Naive thymus-derived CD4-positive, alpha-beta T cell (primary cell): ENCODE measurements at regions of chr7 and their contacts with region 1.

Region 1: DNA sequence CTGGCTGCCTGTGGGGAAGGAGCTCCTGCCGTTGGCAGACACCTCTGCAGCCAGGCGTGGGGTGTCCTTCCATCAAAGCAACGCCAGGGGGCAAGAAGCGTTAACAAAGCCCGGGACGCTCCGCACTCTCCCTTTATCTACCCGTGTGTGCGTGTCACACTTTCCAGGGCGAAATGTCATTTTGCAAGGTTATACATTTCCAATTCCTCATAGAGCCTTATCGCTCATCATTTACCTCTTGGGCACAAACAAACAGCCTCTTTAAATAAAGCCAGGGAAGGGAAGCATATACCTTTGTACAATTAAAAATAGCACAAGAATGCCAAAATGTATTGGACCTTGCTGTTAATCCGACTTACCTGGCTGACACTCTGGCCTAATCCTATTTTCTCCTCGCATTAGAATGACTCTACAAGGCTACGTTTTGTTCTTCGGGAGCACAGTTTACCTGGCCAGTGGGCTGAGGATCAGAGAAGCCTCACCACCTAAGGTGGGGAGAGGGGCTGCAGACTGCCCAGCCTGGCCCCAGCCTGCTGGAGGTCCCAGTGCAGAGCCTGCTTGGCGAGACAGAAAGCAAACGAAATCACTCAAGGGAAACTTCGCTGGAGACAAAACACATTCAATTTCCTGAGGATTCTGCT is 77.6 kb upstream of the EN2 start:
- DNase-seq: peak; percentile 17 to 60 (median 49)
- ATAC-seq: peak; percentile 84
- H3K4me3 ChIP-seq: no peak overlapping the region
- H3K4me3 Mint-ChIP-seq: peak overlapping the region in 9 of 10 donors; percentile 14 to 72 (median 54)
- H3K27ac ChIP-seq: no peak overlapping the region
- H3K27ac Mint-ChIP-seq: peak overlapping the region in 1 of 9 donors; percentile 51
- H3K4me1 ChIP-seq: peaks cover 0 to 16% of the 10 kb centered on the region in 2 donors
- H3K4me1 Mint-ChIP-seq: peaks cover 13 to 50% (median 34%) of the 10 kb centered on the region in 7 donors
- H3K27me3 ChIP-seq: peaks cover 0 to 14% of the 10 kb centered on the region in 2 donors
- H3K27me3 Mint-ChIP-seq: peaks cover 68 to 89% (median 80%) of the 10 kb centered on the region in 5 donors

Region 2: GRCh38 chr7:155456738-155457564 is 76.6 kb after region 1 on chr7:
- CTCF ChIA-PET with region 1: no interaction called
- POLR2A ChIA-PET with region 1: no interaction called
- intact Hi-C with region 1: loop called in 1 of 2 experiments (anchors 2 kb)
- DNase-seq: no peak
- ATAC-seq: no peak
- H3K4me3 ChIP-seq: peak overlapping the region; percentile 24
- H3K4me3 Mint-ChIP-seq: peak overlapping the region; percentile 50 to 87 (median 74)
- H3K27ac ChIP-seq: no peak overlapping the region
- H3K27ac Mint-ChIP-seq: peak overlapping the region in 1 of 9 donors; percentile 83
- H3K4me1 ChIP-seq: no peaks in the 10 kb centered on the region
- H3K4me1 Mint-ChIP-seq: peaks cover 7 to 34% (median 20%) of the 10 kb centered on the region in 7 donors
- H3K27me3 ChIP-seq: peaks cover 0 to 9% of the 10 kb centered on the region in 2 donors
- H3K27me3 Mint-ChIP-seq: peaks cover 50 to 80% (median 68%) of the 10 kb centered on the region in 5 donors

Region 3: GRCh38 chr7:155509725-155510551 is 129.6 kb after region 1 on chr7:
- CTCF ChIA-PET with region 1: no interaction called
- POLR2A ChIA-PET with region 1: no interaction called
- intact Hi-C with region 1: loop called in 1 of 2 experiments (anchors 2 kb)
- DNase-seq: no peak
- ATAC-seq: no peak
- H3K4me3 ChIP-seq: no peak overlapping the region
- H3K4me3 Mint-ChIP-seq: peak overlapping the region; percentile 20 to 72 (median 52)
- H3K27ac ChIP-seq: no peak overlapping the region
- H3K27ac Mint-ChIP-seq: peak overlapping the region in 1 of 9 donors; percentile 70
- H3K4me1 ChIP-seq: peaks cover 0 to 7% of the 10 kb centered on the region in 2 donors
- H3K4me1 Mint-ChIP-seq: peaks cover 11 to 30% (median 18%) of the 10 kb centered on the region in 7 donors
- H3K27me3 ChIP-seq: peaks cover 15 to 28% of the 10 kb centered on the region in 2 donors
- H3K27me3 Mint-ChIP-seq: peaks cover 87 to 90% (median 89%) of the 10 kb centered on the region in 5 donors

Region 4: DNA sequence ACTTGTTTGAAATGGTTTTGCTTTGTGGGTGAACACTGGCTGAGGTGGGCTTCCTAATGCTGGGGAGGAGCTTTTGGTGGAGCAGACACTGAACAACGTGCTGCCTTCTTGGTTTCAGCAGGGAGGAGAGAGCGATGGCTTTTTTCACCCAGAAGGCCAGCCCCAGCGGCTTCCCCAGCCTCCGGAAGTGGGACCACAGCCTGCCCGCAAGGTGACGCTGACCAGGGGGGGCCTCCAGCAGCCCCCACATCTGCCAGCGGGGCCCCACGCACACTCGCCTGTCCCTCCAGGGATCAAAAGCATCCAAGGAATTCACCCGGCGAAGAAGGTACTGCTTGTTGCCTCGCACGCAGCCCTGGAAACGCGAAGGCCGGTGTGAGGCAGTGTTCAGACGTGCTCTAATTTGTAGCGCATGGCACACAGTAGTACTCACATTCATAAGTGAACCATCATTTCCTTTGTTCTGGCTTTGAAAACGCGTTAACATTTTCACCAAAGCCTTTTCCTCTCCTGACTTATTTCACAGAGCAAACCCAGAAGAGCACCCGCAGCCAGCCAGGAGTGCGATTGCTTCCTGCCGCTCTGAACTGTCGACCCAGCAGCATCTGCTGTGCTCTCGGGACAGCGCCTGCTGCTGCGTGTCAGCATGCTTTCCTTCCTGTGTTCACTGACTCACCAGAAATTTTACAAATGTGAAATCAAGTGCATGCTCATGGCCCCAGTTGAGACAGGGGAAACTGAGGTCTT is 383.5 kb after region 1 on chr7:
- CTCF ChIA-PET with region 1: no interaction called
- POLR2A ChIA-PET with region 1: no interaction called
- intact Hi-C with region 1: loop called (anchors 1 to 2 kb)
- DNase-seq: peak in 8 of 9 donors; percentile 48 to 73 (median 60)
- ATAC-seq: peak; percentile 80
- H3K4me3 ChIP-seq: peak overlapping the region; percentile 12
- H3K4me3 Mint-ChIP-seq: peak overlapping the region; percentile 64 to 91 (median 80)
- H3K27ac ChIP-seq: peak overlapping the region; percentile 67
- H3K27ac Mint-ChIP-seq: peak overlapping the region; percentile 73 to 98 (median 91)
- H3K4me1 ChIP-seq: peaks cover 24 to 31% of the 10 kb centered on the region in 2 donors
- H3K4me1 Mint-ChIP-seq: peaks cover 39 to 67% (median 61%) of the 10 kb centered on the region in 7 donors
- H3K27me3 ChIP-seq: no peaks in the 10 kb centered on the region
- H3K27me3 Mint-ChIP-seq: no peaks in the 10 kb centered on the region

Region 5: DNA sequence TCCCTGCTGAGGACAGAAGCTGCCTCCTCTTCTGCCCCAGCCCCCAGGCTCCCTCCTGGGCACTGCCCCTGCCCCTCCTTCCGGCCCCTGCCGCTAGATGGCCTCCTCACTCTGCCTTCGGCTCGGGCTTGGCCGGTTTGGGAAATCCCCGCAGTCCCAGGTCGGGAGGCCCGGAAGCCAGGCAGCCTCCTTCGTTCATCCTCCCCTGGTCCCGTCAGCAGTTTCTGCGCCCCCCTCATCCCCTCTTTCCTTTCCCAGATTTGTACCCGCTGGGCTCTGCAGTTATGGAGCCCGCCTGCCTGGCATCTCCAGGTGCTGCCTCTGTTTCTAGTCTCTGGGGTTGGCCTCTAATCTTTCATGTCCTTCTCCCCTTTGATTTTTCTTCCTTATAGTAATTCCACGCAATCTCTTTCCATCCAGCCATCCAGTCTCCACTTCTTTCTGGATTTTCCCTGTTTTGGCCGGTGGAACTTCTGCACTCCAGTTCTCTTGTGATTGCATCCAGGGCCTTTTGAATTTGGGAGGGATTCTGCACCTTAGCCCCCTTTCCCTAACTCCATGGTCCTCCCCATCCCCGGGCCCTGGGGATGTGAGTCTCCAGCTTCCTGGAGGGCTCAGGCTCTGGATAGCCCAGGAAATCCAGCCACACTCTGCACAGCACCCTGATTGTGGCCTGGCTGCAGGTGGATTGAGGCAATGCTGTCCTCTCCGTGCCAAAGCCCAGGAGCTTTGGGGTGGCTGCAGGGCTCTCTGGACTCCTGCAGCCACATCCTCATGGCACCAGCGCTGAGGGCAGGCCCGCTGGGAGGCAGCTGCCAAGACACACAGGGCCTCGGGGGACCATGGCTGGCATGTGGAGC is 435.2 kb after region 1 on chr7:
- CTCF ChIA-PET with region 1: no interaction called
- POLR2A ChIA-PET with region 1: no interaction called
- intact Hi-C with region 1: loop called in 1 of 2 experiments (anchors 5 kb)
- DNase-seq: peak; percentile 33 to 81 (median 52)
- ATAC-seq: peak; percentile 77
- H3K4me3 ChIP-seq: no peak overlapping the region
- H3K4me3 Mint-ChIP-seq: peak overlapping the region in 4 of 10 donors; percentile 13 to 41 (median 30)
- H3K27ac ChIP-seq: no peak overlapping the region
- H3K27ac Mint-ChIP-seq: peak overlapping the region in 1 of 9 donors; percentile 19
- H3K4me1 ChIP-seq: no peaks in the 10 kb centered on the region
- H3K4me1 Mint-ChIP-seq: peaks cover 13 to 21% (median 16%) of the 10 kb centered on the region in 7 donors
- H3K27me3 ChIP-seq: peaks cover 0 to 9% of the 10 kb centered on the region in 2 donors
- H3K27me3 Mint-ChIP-seq: peaks cover 38 to 51% (median 40%) of the 10 kb centered on the region in 5 donors